Dorsolateral prefrontal cortex (tissue), 120 donors: ENCODE measurements at regions of chr14 and their contacts with region 1.

Region 1: GRCh38 chr14:77107228-77107627 is 9.2 kb downstream of the CIPC start:
- DNase-seq: no peak
- H3K4me3 ChIP-seq: peak overlapping the region in 7 of 59 donors; percentile 8 to 50 (median 34)
- H3K27ac ChIP-seq: peak overlapping the region; percentile 85 to 100 (median 98)
- H3K27me3 ChIP-seq: no peaks in the 10 kb centered on the region
- CTCF ChIP-seq: no peak

Region 2: GRCh38 chr14:77124345-77125280 is 17.4 kb after region 1 on chr14:
- intact Hi-C with region 1: loop called in 1 of 2 experiments (anchors 2 kb)
- DNase-seq: peak in 9 of 10 donors; percentile 57 to 83 (median 67)
- H3K4me3 ChIP-seq: peak overlapping the region; percentile 46 to 83 (median 62)
- H3K27ac ChIP-seq: peak overlapping the region; percentile 65 to 99 (median 92)
- H3K27me3 ChIP-seq: no peaks in the 10 kb centered on the region
- CTCF ChIP-seq: peak in 52 of 56 donors; percentile 6 to 95 (median 66)